CD8-positive, alpha-beta memory T cell (primary cell): ENCODE measurements at regions of chr11 and their contacts with region 1.

Region 1: GRCh38 chr11:72030472-72031045 is 31.9 kb downstream of the IL18BP start:
- DNase-seq: no peak
- H3K4me3 ChIP-seq: no peak overlapping the region
- H3K4me3 Mint-ChIP-seq: peak overlapping the region in 1 of 7 donors; percentile 44
- H3K27ac ChIP-seq: peak overlapping the region; percentile 14
- H3K27ac Mint-ChIP-seq: peak overlapping the region in 6 of 8 donors; percentile 48 to 95 (median 74)
- H3K4me1 ChIP-seq: peaks cover 29% of the 10 kb centered on the region
- H3K4me1 Mint-ChIP-seq: peaks cover 40 to 71% (median 49%) of the 10 kb centered on the region in 3 donors
- H3K27me3 ChIP-seq: no peaks in the 10 kb centered on the region
- H3K27me3 Mint-ChIP-seq: no peaks in the 10 kb centered on the region

Region 2: GRCh38 chr11:71843858-71844257 is 186.7 kb before region 1 on chr11:
- CTCF ChIA-PET with region 1: no interaction called
- POLR2A ChIA-PET with region 1: no interaction called
- DNase-seq: no peak
- H3K4me3 ChIP-seq: no peak overlapping the region
- H3K4me3 Mint-ChIP-seq: no peak overlapping the region
- H3K27ac ChIP-seq: no peak overlapping the region
- H3K27ac Mint-ChIP-seq: no peak overlapping the region
- H3K4me1 ChIP-seq: no peaks in the 10 kb centered on the region
- H3K4me1 Mint-ChIP-seq: no peaks in the 10 kb centered on the region
- H3K27me3 ChIP-seq: no peaks in the 10 kb centered on the region
- H3K27me3 Mint-ChIP-seq: peaks cover 0 to 2% of the 10 kb centered on the region in 2 donors

Region 3: GRCh38 chr11:72015511-72016171 is 14.9 kb before region 1 on chr11:
- CTCF ChIA-PET with region 1: interaction called, 23 read pairs
- POLR2A ChIA-PET with region 1: no interaction called
- DNase-seq: no peak
- H3K4me3 ChIP-seq: no peak overlapping the region
- H3K4me3 Mint-ChIP-seq: no peak overlapping the region
- H3K27ac ChIP-seq: no peak overlapping the region
- H3K27ac Mint-ChIP-seq: peak overlapping the region in 3 of 8 donors; percentile 33 to 94 (median 54)
- H3K4me1 ChIP-seq: no peaks in the 10 kb centered on the region
- H3K4me1 Mint-ChIP-seq: no peaks in the 10 kb centered on the region
- H3K27me3 ChIP-seq: no peaks in the 10 kb centered on the region
- H3K27me3 Mint-ChIP-seq: no peaks in the 10 kb centered on the region

Region 4: DNA sequence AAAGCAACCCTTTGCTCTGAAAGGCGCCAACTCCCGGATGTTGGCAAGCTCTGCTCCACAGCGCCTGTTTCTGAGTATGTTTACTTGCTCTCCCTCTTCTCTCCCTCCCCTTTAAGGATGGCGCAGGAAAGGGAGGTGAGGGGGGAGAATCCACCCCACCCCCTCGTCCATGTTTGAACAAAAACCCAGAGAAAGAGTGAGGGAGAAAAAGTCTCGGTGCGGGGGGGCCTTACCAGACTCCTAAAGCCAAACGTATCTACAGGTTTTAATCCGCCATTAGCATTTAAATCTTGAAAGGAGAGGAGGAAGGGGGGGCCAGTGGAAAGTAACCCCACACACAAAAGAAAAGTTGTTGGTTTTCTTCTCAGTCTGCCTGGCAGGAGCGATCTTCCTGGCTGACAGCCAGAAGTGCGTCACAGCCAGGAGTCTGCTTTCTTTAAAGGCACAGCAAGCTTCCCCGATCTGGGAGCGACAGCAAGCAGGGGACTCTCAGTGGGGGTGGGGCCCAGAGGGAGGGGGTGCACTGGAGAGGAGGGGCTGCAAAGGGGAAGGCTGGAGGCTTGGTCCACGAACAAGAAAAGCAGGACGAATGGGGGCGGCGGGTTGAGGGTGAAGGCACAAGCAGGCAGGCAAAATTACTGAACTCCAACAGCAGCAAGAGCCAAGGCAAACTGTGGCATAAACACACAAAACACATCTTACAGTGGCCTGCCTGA is 10.3 kb after region 1 on chr11:
- CTCF ChIA-PET with region 1: interaction called, 38 read pairs
- POLR2A ChIA-PET with region 1: interaction called, 4 read pairs
- DNase-seq: peak; percentile 68 to 87 (median 77)
- H3K4me3 ChIP-seq: peak overlapping the region; percentile 68
- H3K4me3 Mint-ChIP-seq: no peak overlapping the region
- H3K27ac ChIP-seq: peak overlapping the region; percentile 90
- H3K27ac Mint-ChIP-seq: no peak overlapping the region
- H3K4me1 ChIP-seq: peaks cover 67% of the 10 kb centered on the region
- H3K4me1 Mint-ChIP-seq: peaks cover 11 to 32% (median 13%) of the 10 kb centered on the region in 3 donors
- H3K27me3 ChIP-seq: no peaks in the 10 kb centered on the region
- H3K27me3 Mint-ChIP-seq: no peaks in the 10 kb centered on the region

Region 5: GRCh38 chr11:72048766-72049456 is 18.4 kb after region 1 on chr11:
- CTCF ChIA-PET with region 1: interaction called, 7 read pairs
- POLR2A ChIA-PET with region 1: interaction called, 15 read pairs
- DNase-seq: no peak
- H3K4me3 ChIP-seq: no peak overlapping the region
- H3K4me3 Mint-ChIP-seq: no peak overlapping the region
- H3K27ac ChIP-seq: no peak overlapping the region
- H3K27ac Mint-ChIP-seq: peak overlapping the region in 2 of 8 donors; percentile 66 to 72
- H3K4me1 ChIP-seq: peaks cover 3% of the 10 kb centered on the region
- H3K4me1 Mint-ChIP-seq: peaks cover 0 to 6% (median 2%) of the 10 kb centered on the region in 3 donors
- H3K27me3 ChIP-seq: no peaks in the 10 kb centered on the region
- H3K27me3 Mint-ChIP-seq: no peaks in the 10 kb centered on the region

Region 6: DNA sequence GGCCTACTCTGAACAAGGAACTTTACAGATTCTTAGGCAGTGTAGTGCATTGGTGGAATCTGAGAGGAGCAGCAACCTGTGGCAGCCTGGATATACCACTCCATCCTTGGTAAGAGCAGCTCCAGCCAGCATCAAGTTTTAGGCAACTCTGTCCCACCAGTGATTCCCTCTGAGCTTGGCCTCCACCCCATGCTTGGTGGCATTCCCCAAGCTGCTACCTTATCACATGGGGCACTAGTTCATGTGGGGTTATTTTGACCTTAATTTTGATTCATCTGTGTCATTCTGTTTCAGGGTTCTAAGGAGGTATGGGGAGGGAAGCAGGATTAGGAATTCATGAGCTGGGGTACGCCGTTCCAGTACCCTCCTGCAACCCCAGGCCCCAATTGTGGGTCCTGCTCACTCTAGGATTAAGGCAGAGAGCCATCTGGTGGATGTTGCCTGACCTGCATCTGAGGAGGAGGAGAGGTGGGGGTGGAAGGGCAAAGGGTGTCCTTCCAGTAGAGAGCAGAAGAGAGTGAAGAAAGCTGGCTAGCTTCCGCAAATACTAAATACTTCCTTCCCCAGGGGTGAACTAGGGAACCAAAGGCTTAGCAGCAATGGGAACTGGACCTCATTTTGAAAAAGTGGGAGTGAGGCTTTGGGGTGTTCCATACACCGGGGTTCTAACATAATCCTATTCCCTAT is 60.6 kb after region 1 on chr11:
- CTCF ChIA-PET with region 1: interaction called, 177 read pairs
- POLR2A ChIA-PET with region 1: no interaction called
- DNase-seq: peak; percentile 39 to 77 (median 48)
- H3K4me3 ChIP-seq: no peak overlapping the region
- H3K4me3 Mint-ChIP-seq: peak overlapping the region in 1 of 7 donors; percentile 75
- H3K27ac ChIP-seq: no peak overlapping the region
- H3K27ac Mint-ChIP-seq: peak overlapping the region; percentile 37 to 84 (median 62)
- H3K4me1 ChIP-seq: no peaks in the 10 kb centered on the region
- H3K4me1 Mint-ChIP-seq: peaks cover 3 to 12% (median 3%) of the 10 kb centered on the region in 3 donors
- H3K27me3 ChIP-seq: no peaks in the 10 kb centered on the region
- H3K27me3 Mint-ChIP-seq: no peaks in the 10 kb centered on the region

Region 7: DNA sequence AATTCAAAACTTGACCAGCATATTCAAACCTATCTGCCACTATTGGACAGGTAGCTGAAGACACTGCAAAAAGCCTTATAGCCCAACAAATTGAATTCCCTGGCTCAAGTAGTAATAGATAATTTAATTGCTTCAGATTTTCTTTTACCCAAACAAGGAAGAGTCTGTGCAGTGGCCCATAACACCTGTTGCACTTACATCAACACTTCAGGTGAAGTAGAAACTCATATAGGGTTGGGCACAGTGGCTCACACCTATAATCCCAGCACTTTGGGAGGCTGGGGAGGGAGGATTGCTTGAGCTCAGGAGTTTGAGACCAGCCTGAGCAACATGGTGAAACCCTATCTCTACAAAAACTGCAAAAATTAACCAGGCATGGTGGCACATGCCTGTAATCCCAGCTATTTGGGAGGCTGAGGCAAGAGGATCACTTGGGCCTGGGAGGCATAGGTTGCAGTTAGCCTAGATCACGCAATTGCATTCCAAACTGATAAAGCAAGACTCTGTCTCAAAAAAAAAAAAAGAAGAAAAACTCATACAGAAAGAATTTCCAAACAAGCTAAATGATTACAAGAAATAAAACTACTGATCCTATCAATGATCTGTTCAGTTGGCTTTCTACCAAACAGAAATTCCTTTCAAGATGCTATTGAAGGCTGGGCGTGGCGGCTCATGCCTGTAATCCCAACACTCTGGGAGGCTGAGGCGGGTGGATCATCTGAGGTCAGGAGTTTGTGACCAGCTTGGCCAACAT is 114.4 kb after region 1 on chr11:
- CTCF ChIA-PET with region 1: interaction called, 54 read pairs
- POLR2A ChIA-PET with region 1: no interaction called
- DNase-seq: no peak
- H3K4me3 ChIP-seq: no peak overlapping the region
- H3K4me3 Mint-ChIP-seq: no peak overlapping the region
- H3K27ac ChIP-seq: no peak overlapping the region
- H3K27ac Mint-ChIP-seq: peak overlapping the region in 1 of 8 donors; percentile 36
- H3K4me1 ChIP-seq: no peaks in the 10 kb centered on the region
- H3K4me1 Mint-ChIP-seq: peaks cover 0 to 11% (median 2%) of the 10 kb centered on the region in 3 donors
- H3K27me3 ChIP-seq: no peaks in the 10 kb centered on the region
- H3K27me3 Mint-ChIP-seq: peaks cover under 1 to 6% of the 10 kb centered on the region in 2 donors

Region 8: GRCh38 chr11:72430741-72431570 is 400.4 kb after region 1 on chr11:
- CTCF ChIA-PET with region 1: interaction called, 12 read pairs
- POLR2A ChIA-PET with region 1: no interaction called
- DNase-seq: peak in 1 of 5 donors; percentile 34
- H3K4me3 ChIP-seq: no peak overlapping the region
- H3K4me3 Mint-ChIP-seq: peak overlapping the region in 2 of 7 donors; percentile 6 to 51
- H3K27ac ChIP-seq: no peak overlapping the region
- H3K27ac Mint-ChIP-seq: peak overlapping the region in 6 of 8 donors; percentile 4 to 71 (median 52)
- H3K4me1 ChIP-seq: peaks cover 19% of the 10 kb centered on the region
- H3K4me1 Mint-ChIP-seq: peaks cover 34 to 52% (median 49%) of the 10 kb centered on the region in 3 donors
- H3K27me3 ChIP-seq: no peaks in the 10 kb centered on the region
- H3K27me3 Mint-ChIP-seq: no peaks in the 10 kb centered on the region